ENCODE measurements at regions of chr4 and their contacts with region 1.

Region 1: GRCh38 chr4:105191621-105192210 is 45.0 kb downstream of the TET2 start:
- DNase-seq: no peak
- ATAC-seq: peak; percentile 71 to 87 (median 84)
- H3K4me3 ChIP-seq: no peak overlapping the region
- H3K27ac ChIP-seq: peak overlapping the region; percentile 4
- H3K4me1 ChIP-seq: peaks cover 35% of the 10 kb centered on the region
- H3K27me3 ChIP-seq: no peaks in the 10 kb centered on the region
- CTCF ChIP-seq: no peak

Region 2: GRCh38 chr4:105146276-105147015 is 45.3 kb before region 1 on chr4 and contains the start of gene TET2:
- intact Hi-C with region 1: loop called in 1 of 2 experiments (anchors 5 kb)
- DNase-seq: peak; percentile 79 to 85
- ATAC-seq: peak; percentile 77 to 88 (median 82)
- H3K4me3 ChIP-seq: peak within 1 kb of the TSS; percentile 86
- H3K27ac ChIP-seq: peak within 1 kb of the TSS; percentile 84
- H3K4me1 ChIP-seq: peaks cover 24% of the 10 kb centered on the region
- H3K27me3 ChIP-seq: no peaks in the 10 kb centered on the region
- CTCF ChIP-seq: no peak
- total RNA-seq, gene TET2: 12.4 to 24.0 (median 15.4) TPM

Region 3: GRCh38 chr4:105433421-105433820 is 241.7 kb after region 1 on chr4:
- intact Hi-C with region 1: no loop called
- DNase-seq: no peak
- ATAC-seq: no peak
- H3K4me3 ChIP-seq: no peak overlapping the region
- H3K27ac ChIP-seq: no peak overlapping the region
- H3K4me1 ChIP-seq: peaks cover 5% of the 10 kb centered on the region
- H3K27me3 ChIP-seq: no peaks in the 10 kb centered on the region
- CTCF ChIP-seq: no peak